ENCODE measurements at regions of chr1 and their contacts with region 1.

Region 1: DNA sequence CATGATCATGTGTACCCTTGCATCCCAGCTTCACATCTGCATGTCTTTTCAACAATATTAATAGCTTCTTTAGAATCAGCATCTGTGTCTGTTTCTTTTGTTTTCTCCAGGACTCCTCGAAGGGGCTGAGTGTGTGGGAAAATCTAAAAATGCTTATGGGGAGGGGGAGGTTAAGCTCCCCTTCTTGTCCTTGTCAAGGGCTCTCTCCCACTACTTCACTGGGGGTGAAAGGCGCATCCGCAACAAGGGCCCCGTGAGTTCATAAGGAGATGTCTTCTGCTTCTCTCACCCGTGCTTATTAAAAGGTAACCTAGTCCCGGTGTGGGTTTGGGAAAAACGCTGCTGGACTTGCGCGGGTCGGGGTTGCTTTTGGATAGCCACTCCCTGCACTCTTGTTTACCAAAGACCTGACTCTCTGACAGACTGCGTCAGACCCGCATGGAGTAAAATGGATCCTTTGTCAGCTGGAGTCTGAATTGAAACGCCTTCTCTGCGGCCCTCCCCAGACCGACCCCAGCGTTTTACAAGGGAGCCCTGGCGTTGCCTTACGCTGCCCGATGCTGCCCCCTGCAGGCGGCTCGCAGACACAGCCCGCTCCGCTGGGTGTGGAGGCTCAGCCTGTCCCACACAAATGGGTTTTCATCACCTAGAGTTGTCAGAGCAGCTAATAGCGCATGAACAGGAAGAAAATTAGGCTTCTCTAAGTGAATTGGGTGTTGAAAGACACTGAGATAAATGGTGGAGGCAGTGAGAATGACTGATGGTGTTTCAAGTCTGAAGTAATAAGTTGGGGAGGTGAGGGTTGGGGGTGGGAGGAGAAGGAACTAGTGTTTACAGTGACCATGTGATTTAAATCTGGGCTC is 53.8 kb downstream of the IER5 start:
- DNase-seq: peak; percentile 91
- H3K4me3 Mint-ChIP-seq: peak overlapping the region; percentile 40
- H3K27ac Mint-ChIP-seq: no peak overlapping the region
- H3K4me1 Mint-ChIP-seq: peaks cover 53% of the 10 kb centered on the region
- H3K27me3 Mint-ChIP-seq: no peaks in the 10 kb centered on the region
- CTCF ChIP-seq: peak; percentile 99

Region 2: DNA sequence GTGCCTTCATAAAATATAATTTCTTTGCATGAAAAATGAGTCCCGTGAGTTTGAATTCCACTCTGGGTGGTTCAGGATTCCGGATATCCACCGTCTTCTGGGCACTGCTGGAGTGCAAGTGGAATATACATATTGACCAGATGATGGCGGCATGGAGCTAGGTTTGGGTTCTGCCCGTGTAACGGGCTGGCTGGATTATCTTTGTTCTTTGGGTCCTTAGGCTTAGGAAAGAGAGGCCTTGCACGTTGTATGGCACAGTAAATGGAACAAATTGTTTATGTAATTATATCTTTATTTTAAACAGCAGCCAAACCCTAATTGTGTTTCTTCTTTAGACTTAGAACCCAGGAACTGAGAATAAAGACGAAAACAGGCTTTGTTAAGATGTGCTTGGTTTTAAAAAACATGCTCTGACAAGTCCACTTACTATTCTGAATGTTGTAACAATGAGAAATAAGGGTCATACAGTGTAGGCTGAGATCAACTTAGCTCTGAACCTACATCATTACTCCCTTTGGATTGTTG is 626.4 kb before region 1 on chr1:
- CTCF ChIA-PET with region 1: interaction called, 7 read pairs
- POLR2A ChIA-PET with region 1: interaction called, 3 read pairs
- intact Hi-C with region 1: loop called (anchors 1 kb)
- DNase-seq: peak; percentile 95
- H3K4me3 Mint-ChIP-seq: no peak overlapping the region
- H3K27ac Mint-ChIP-seq: peak overlapping the region; percentile 91
- H3K4me1 Mint-ChIP-seq: peaks cover 7% of the 10 kb centered on the region
- H3K27me3 Mint-ChIP-seq: no peaks in the 10 kb centered on the region
- CTCF ChIP-seq: peak; percentile 98

Region 3: GRCh38 chr1:180854478-180854877 is 287.8 kb before region 1 on chr1:
- CTCF ChIA-PET with region 1: no interaction called
- POLR2A ChIA-PET with region 1: no interaction called
- intact Hi-C with region 1: no loop called
- DNase-seq: no peak
- H3K4me3 Mint-ChIP-seq: no peak overlapping the region
- H3K27ac Mint-ChIP-seq: no peak overlapping the region
- H3K4me1 Mint-ChIP-seq: peaks cover 34% of the 10 kb centered on the region
- H3K27me3 Mint-ChIP-seq: no peaks in the 10 kb centered on the region
- CTCF ChIP-seq: no peak

Region 4: DNA sequence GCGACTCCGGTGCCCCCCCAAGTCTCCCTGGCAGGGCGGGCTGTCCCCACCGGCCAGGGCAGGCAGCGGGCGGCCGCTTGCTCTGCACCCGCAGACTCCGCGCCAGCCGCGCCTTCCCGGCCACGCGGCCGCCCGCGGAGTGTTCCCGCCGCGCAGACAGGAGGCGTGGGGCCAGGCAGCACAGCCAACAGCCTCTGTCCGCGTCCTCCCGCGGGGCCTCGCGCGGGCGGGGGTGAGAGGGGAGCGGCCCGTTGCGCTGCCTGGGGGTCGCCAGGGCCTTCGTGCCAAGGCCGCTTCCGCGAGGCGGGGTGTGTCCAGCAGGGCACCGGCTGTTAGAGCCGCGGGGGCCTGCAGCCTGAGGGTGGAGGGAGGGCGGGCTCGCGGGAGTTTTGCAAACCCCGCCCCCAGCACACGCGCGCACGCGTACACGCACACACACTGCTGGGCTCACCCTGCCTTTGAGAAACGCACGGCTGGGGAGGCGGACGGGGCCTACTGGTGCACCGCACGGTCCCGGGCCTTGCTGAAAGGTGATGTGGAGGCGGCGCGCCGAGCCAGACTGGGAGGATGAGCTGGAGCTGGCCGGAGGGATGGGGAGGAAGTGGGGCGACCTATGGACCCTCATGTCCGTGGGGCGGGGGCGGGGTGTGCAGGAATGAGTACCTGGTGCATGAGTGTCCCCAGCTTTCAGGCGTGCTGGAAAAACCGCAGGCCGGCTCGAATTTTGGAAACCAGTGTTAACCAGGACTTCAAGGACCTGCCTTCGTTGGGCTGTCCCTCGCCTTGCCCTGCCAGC is 188.1 kb before region 1 on chr1:
- CTCF ChIA-PET with region 1: interaction called, 11 read pairs
- POLR2A ChIA-PET with region 1: interaction called, 4 read pairs
- intact Hi-C with region 1: no loop called
- DNase-seq: no peak
- H3K4me3 Mint-ChIP-seq: no peak overlapping the region
- H3K27ac Mint-ChIP-seq: no peak overlapping the region
- H3K4me1 Mint-ChIP-seq: peaks cover 5% of the 10 kb centered on the region
- H3K27me3 Mint-ChIP-seq: no peaks in the 10 kb centered on the region
- CTCF ChIP-seq: no peak

Region 5: GRCh38 chr1:181033799-181034451 is 108.4 kb before region 1 on chr1 and contains the start of gene MR1:
- CTCF ChIA-PET with region 1: interaction called, 135 read pairs
- POLR2A ChIA-PET with region 1: interaction called, 67 read pairs
- intact Hi-C with region 1: loop called (anchors 1 kb)
- DNase-seq: peak; percentile 94
- H3K4me3 Mint-ChIP-seq: peak within 1 kb of the TSS; percentile 91
- H3K27ac Mint-ChIP-seq: peak within 1 kb of the TSS; percentile 98
- H3K4me1 Mint-ChIP-seq: peaks cover 49% of the 10 kb centered on the region
- H3K27me3 Mint-ChIP-seq: no peaks in the 10 kb centered on the region
- CTCF ChIP-seq: no peak
- total RNA-seq, gene MR1: 33.4 and 46.6 TPM in 2 replicates

Region 6: DNA sequence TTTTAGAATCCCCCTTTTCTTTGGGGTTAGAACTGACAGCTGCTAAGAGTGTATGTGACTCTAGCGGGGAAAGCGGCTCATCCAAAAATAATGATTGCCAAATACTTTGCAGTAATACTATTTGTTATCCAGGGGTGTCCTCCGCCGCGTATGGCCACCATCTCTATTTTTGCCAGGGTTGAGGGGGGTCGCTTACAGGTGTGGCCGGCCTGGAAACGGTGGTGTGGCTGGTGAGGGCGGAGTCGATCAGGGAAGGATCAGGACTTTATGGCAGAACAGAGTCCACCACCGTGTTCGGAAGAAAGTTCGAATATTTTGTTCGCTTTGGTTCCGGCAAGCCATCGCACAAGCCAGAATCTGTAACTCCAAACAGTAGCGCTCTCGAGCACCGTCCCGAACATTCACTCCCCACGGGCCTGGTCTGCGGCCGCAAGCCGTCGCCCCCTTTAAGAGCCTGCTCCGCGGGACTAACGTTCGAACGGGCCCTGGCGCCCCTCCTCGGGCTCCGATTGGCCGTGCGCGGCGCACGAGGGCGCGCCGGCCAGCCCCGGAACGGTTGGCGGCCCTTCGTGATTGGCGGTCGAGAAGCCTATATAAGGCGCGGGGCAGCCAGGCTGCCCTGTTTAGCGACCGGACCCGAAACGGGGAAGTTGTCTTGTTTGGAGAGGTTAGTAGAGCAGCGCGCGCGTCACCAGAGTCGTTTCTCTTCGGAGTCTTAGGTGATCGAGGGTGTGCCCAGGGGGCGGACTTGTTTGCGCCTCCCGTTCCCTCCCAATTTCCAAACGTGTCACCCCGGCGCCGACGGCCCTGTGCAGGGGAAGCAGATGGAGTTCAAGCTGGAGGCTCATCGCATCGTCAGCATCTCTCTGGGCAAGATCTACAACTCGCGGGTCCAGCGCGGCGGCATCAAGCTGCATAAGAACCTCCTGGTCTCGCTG is 54.0 kb before region 1 on chr1 and contains the start of gene IER5:
- CTCF ChIA-PET with region 1: interaction called, 215 read pairs
- POLR2A ChIA-PET with region 1: interaction called, 1,402 read pairs
- intact Hi-C with region 1: loop called (anchors 1 kb)
- DNase-seq: peak; percentile 99
- H3K4me3 Mint-ChIP-seq: peak within 1 kb of the TSS; percentile 100
- H3K27ac Mint-ChIP-seq: peak within 1 kb of the TSS; percentile 99
- H3K4me1 Mint-ChIP-seq: peaks cover 43% of the 10 kb centered on the region
- H3K27me3 Mint-ChIP-seq: no peaks in the 10 kb centered on the region
- CTCF ChIP-seq: no peak
- total RNA-seq, gene IER5: 47.5 and 49.5 TPM in 2 replicates

Region 7: GRCh38 chr1:181152892-181153633 is 10.7 kb after region 1 on chr1:
- CTCF ChIA-PET with region 1: interaction called, 162 read pairs
- POLR2A ChIA-PET with region 1: interaction called, 10 read pairs
- intact Hi-C with region 1: no loop called
- DNase-seq: peak; percentile 28
- H3K4me3 Mint-ChIP-seq: no peak overlapping the region
- H3K27ac Mint-ChIP-seq: no peak overlapping the region
- H3K4me1 Mint-ChIP-seq: peaks cover 33% of the 10 kb centered on the region
- H3K27me3 Mint-ChIP-seq: no peaks in the 10 kb centered on the region
- CTCF ChIP-seq: no peak

Region 8: DNA sequence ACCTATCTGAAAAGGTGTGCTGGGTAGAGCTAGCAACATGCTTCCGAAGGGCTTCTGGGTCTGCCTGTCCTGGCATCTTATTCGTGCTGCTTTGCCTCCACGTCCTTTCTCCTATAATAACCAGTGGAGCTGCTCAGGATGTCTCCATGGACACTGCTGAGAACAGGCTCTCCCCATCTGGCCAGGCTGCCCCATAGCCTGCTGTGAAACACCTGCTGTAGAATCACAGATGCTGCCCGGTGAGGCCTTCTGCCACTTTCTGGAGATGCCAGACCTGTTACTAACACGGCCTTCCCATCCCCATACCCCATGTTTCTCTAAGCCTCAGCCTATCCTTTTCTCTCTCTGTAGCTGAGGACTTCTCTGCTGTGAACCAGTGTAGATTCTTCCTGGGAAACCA is 66.6 kb after region 1 on chr1:
- CTCF ChIA-PET with region 1: no interaction called
- POLR2A ChIA-PET with region 1: no interaction called
- intact Hi-C with region 1: no loop called
- DNase-seq: no peak
- H3K4me3 Mint-ChIP-seq: no peak overlapping the region
- H3K27ac Mint-ChIP-seq: no peak overlapping the region
- H3K4me1 Mint-ChIP-seq: peaks cover 5% of the 10 kb centered on the region
- H3K27me3 Mint-ChIP-seq: no peaks in the 10 kb centered on the region
- CTCF ChIP-seq: no peak

Measured in MCF 10A (cell line).